ENCODE measurements at regions of chr1 and their contacts with region 1.

Region 1: DNA sequence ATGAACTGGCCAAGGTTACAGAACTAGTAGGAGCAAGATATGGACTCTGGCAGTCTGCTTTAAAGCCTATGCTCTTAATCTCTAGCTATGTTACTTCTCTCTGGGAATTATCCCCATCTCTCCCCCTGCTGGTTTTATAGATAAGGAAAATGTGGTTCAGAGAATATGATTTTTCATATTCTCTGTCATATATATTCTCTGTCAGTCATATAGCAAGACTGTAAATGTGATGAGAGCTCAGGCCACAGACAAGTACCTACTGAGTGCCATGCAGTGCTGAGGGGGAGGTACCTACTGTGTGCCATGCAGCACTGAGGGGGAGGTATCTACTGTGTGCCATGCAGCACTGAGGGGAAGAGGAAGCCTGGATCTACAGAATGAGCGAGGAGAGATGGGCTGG is 220.3 kb upstream of the FGGY start:
- DNase-seq: no peak
- ATAC-seq: peak; percentile 36

Region 2: DNA sequence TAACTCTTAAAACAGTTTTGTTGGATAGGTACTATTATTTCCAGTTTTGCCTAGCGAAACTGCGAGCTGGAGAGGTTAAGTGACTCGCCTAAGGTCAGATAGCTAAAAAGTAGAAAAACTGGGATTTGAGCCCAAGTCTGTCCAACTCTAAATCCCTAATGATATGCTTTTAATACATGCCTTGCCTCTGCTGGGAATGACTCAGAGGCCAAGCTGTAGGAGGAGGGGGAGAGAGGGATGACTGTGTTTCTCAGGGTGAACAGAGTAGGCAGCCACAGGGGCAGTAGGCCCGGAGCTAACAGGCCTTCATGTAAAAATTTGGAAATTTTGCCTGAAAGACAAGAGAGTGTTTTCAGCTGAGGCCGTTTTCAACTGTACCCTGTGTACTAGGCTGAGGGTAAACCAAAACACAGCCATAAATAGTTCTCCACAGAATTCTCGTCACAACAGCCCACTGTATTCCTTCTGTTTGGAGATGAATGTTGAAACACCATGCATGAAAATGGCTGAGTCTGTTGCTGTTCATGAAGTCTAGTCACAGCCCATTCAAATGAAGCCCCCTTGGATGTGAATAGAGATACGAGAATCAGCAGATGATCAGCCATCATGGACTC is 630.7 kb after region 1 on chr1:
- intact Hi-C with region 1: loop called (anchors 10 kb)
- DNase-seq: peak; percentile 59
- ATAC-seq: peak; percentile 80